ENCODE measurements at regions of chr7 and their contacts with region 1.

Region 1: DNA sequence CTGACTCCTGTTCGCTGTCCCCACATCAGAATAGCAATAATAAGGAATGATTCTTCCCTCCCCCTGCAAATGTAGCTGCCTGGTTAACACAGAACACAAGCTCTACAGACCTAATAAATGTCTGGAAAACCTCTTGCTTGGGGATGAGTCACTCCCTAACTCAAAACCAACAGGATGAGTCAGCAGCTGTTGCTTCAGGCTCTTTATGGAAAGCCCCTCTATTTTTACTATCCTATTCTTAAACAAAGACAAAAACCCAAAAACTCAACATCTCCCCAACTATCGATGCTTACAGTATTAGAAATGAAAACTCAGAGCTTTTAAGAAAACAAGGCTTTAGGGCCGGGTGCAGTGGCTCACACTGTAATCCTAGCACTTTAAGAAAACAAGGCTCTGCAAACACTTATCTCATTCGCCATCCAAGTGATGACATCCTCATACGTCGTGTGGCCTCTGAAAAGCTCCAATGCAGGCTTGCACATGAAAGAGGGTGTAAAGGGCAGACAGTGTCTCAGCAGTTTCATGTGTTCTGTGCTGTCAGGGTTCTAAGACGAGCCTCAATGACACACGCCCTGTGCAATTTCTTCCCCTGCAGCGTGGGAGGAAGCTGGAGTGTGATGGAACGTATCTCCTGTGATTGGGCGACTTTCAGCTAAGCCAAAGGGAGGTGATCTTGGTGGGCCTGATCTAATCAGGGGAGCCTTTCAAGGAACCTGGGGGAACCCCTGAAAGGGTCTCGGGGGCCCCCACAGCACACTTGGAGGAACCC is 70.1 kb downstream of the AMZ1 start:
- DNase-seq: peak in 3 of 5 donors; percentile 42 to 71 (median 49)
- H3K4me3 ChIP-seq: no peak overlapping the region
- H3K27ac ChIP-seq: peak overlapping the region; percentile 74 to 94
- H3K4me1 ChIP-seq: peaks cover 41% of the 10 kb centered on the region
- H3K27me3 ChIP-seq: no peaks in the 10 kb centered on the region
- CTCF ChIP-seq: no peak
- EP300 ChIP-seq: no peak
- POLR2A ChIP-seq: no peak

Region 2: GRCh38 chr7:2811476-2812113 is 53.5 kb after region 1 on chr7:
- intact Hi-C with region 1: loop called in 2 of 4 experiments (anchors 5 to 10 kb)
- DNase-seq: peak; percentile 52 to 69 (median 64)
- H3K4me3 ChIP-seq: peak overlapping the region; percentile 22
- H3K27ac ChIP-seq: peak overlapping the region; percentile 23 to 82
- H3K4me1 ChIP-seq: peaks cover 42% of the 10 kb centered on the region
- H3K27me3 ChIP-seq: no peaks in the 10 kb centered on the region
- CTCF ChIP-seq: no peak
- EP300 ChIP-seq: no peak
- POLR2A ChIP-seq: no peak

Region 3: DNA sequence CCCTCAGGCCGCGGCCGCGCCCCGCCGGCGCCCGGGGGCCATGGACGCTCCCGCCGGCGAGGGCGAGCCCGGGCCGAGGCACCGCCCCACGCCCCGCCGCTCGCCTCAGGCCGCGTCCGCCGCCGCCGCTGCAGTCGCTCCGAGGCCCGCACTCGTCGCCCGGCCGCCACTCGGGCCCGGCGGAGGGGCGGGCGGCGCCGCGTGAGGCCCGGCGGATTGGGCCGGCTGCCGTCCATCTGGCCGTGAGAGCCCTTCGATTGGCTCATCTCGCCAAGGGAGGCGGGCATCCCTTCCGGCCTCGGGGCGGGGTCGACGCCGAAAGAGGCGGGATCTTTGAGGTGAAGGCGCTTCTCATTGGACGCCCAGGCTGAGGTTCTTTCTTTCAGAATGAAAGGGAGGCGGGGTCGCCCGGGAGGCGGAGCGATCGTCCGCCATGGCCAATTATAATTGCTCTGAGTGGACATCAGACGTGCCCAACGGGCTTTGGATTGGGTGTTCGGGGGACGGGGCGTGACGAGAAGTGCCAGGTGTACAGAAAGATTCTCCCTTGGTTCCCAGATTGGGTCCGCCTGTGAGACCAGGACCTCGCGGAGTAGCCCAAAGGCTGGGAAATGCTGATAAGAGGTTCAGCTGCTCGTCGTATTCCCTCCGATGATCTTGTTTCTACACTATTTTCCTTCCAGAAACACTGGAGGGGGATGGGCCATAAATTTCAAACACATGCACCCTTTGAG is 86.2 kb after region 1 on chr7 and contains the start of gene GNA12:
- intact Hi-C with region 1: loop called in 2 of 4 experiments (anchors 5 to 10 kb)
- DNase-seq: peak; percentile 98 to 99 (median 99)
- H3K4me3 ChIP-seq: peak within 1 kb of the TSS; percentile 60
- H3K27ac ChIP-seq: peak within 1 kb of the TSS; percentile 9 to 43
- H3K4me1 ChIP-seq: peaks cover 6% of the 10 kb centered on the region
- H3K27me3 ChIP-seq: no peaks in the 10 kb centered on the region
- CTCF ChIP-seq: no peak
- EP300 ChIP-seq: no peak
- POLR2A ChIP-seq: no peak
- total RNA-seq, gene GNA12: 13.4 to 94.4 (median 70.1) TPM